ENCODE measurements at regions of chr7 and their contacts with region 1.

Region 1: GRCh38 chr7:39894904-39895303 is 55.2 kb upstream of the CDK13 start:
- DNase-seq: no peak
- H3K4me3 ChIP-seq: no peak overlapping the region
- H3K4me3 Mint-ChIP-seq: no peak overlapping the region
- H3K27ac ChIP-seq: no peak overlapping the region
- H3K27ac Mint-ChIP-seq: peak overlapping the region in 1 of 8 donors; percentile 65
- H3K4me1 ChIP-seq: no peaks in the 10 kb centered on the region
- H3K4me1 Mint-ChIP-seq: no peaks in the 10 kb centered on the region
- H3K27me3 ChIP-seq: peaks cover 4% of the 10 kb centered on the region
- H3K27me3 Mint-ChIP-seq: peaks cover 2 to 9% of the 10 kb centered on the region in 2 donors

Region 2: DNA sequence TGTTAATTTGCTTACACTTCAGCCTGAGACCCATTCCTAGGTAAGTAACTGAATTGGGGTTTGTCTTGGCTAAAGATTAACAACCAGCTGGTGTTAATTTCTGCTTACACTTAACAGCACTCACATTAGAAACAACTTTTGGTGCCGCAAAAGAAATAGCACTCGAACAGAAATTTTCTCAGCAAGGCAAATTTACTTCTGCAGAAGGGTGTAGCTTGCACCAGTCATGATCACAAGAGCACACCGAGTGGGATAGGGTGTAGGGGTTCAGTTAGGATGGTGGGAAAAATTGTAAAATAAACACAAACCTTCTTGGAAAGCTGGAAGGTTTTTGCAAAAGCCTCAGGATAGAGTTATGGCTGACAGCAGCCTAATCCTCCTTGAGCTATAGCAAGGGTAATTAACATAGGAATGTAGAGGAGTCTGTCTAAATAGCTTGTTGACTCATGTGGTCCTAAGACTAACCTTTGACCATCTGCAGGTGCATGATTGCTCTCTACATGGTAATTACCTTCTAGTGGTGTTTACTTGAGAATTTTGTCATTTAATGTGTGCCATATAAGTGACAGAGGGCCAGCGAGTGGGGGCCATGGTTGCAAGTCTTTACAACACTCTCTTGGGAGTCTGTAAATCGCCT is 12.6 kb before region 1 on chr7:
- CTCF ChIA-PET with region 1: interaction called, 12 read pairs
- POLR2A ChIA-PET with region 1: no interaction called
- DNase-seq: no peak
- H3K4me3 ChIP-seq: no peak overlapping the region
- H3K4me3 Mint-ChIP-seq: no peak overlapping the region
- H3K27ac ChIP-seq: no peak overlapping the region
- H3K27ac Mint-ChIP-seq: no peak overlapping the region
- H3K4me1 ChIP-seq: no peaks in the 10 kb centered on the region
- H3K4me1 Mint-ChIP-seq: peaks cover 0 to 4% (median 0%) of the 10 kb centered on the region in 3 donors
- H3K27me3 ChIP-seq: no peaks in the 10 kb centered on the region
- H3K27me3 Mint-ChIP-seq: peaks cover 9 to 30% of the 10 kb centered on the region in 2 donors

Region 3: DNA sequence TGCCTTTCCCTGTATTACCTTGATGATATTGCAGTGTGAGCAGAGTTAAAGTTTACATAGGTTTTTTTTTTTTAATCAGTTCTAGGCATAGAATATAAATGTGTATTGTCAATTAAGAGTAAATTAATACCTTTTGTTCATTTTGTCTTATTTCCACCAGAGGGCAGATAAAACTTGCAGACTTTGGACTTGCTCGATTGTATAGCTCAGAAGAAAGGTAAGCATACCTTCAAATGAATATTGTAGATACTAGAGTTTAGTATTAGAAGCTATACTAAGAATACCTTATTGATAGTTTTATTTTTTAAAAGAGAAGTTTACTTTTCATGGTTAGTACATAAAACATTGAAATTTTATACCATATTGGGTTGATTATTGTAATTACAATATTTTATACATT is 152.8 kb after region 1 on chr7:
- CTCF ChIA-PET with region 1: interaction called, 96 read pairs
- POLR2A ChIA-PET with region 1: no interaction called
- DNase-seq: no peak
- H3K4me3 ChIP-seq: no peak overlapping the region
- H3K4me3 Mint-ChIP-seq: no peak overlapping the region
- H3K27ac ChIP-seq: no peak overlapping the region
- H3K27ac Mint-ChIP-seq: peak overlapping the region in 3 of 8 donors; percentile 39 to 72 (median 46)
- H3K4me1 ChIP-seq: no peaks in the 10 kb centered on the region
- H3K4me1 Mint-ChIP-seq: peaks cover 5 to 14% (median 13%) of the 10 kb centered on the region in 3 donors
- H3K27me3 ChIP-seq: no peaks in the 10 kb centered on the region
- H3K27me3 Mint-ChIP-seq: no peaks in the 10 kb centered on the region

Region 4: DNA sequence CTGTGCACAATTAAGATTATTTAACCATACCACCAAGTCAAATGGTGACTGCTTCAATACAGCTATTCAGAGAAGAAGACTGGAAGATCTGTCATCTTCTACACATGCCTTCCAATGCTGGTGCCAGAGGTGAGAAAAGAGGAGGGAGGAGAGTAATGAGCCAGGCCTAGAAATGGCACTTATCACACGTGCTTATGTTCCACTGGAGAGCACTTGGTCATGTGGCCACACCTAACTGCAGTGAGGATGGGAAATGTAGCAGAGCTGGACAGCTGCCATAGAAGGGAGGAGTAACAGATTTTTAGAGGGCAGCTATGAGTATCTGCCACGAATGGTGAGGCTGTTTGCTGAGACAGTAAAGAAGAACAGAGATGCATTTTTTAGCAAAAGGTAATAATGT is 162.4 kb after region 1 on chr7:
- CTCF ChIA-PET with region 1: interaction called, 96 read pairs
- POLR2A ChIA-PET with region 1: interaction called, 3 read pairs
- DNase-seq: no peak
- H3K4me3 ChIP-seq: no peak overlapping the region
- H3K4me3 Mint-ChIP-seq: no peak overlapping the region
- H3K27ac ChIP-seq: no peak overlapping the region
- H3K27ac Mint-ChIP-seq: peak overlapping the region in 4 of 8 donors; percentile 25 to 53 (median 41)
- H3K4me1 ChIP-seq: no peaks in the 10 kb centered on the region
- H3K4me1 Mint-ChIP-seq: peaks cover 12 to 26% (median 17%) of the 10 kb centered on the region in 3 donors
- H3K27me3 ChIP-seq: no peaks in the 10 kb centered on the region
- H3K27me3 Mint-ChIP-seq: no peaks in the 10 kb centered on the region